Heart left ventricle (tissue), 16 donors: ENCODE measurements at regions of chr1 and their contacts with region 1.

Region 1: DNA sequence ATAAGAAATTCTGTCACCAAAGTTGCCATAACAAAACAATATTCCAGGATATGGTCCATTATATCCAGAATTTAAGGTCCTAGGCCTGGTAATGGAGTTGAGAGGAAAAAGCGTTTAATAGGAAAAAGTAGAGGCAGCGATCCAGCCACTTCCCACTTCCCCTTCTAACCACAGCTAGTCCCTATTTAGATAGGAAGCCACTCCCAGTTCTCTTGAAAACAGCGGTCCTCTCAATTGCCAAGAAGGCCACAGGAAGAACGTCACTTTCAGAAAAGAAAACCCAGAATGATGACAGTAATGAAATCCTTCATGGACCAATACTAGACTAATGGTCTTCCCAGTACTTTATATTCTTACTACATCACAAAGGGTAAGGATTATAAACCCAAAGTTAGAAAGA is 38.6 kb downstream of the ABL2 start:
- DNase-seq: peak in 4 of 5 donors; percentile 39 to 56 (median 46)
- ATAC-seq: peak; percentile 65 to 94 (median 82)
- H3K4me3 ChIP-seq: peak overlapping the region in 1 of 12 donors; percentile 9
- H3K27ac ChIP-seq: peak overlapping the region in 11 of 12 donors; percentile 17 to 88 (median 75)
- H3K4me1 ChIP-seq: peaks cover 0 to 28% (median 0%) of the 10 kb centered on the region in 12 donors
- H3K27me3 ChIP-seq: no peaks in the 10 kb centered on the region
- CTCF ChIP-seq: no peak
- POLR2A ChIP-seq: no peak

Region 2: DNA sequence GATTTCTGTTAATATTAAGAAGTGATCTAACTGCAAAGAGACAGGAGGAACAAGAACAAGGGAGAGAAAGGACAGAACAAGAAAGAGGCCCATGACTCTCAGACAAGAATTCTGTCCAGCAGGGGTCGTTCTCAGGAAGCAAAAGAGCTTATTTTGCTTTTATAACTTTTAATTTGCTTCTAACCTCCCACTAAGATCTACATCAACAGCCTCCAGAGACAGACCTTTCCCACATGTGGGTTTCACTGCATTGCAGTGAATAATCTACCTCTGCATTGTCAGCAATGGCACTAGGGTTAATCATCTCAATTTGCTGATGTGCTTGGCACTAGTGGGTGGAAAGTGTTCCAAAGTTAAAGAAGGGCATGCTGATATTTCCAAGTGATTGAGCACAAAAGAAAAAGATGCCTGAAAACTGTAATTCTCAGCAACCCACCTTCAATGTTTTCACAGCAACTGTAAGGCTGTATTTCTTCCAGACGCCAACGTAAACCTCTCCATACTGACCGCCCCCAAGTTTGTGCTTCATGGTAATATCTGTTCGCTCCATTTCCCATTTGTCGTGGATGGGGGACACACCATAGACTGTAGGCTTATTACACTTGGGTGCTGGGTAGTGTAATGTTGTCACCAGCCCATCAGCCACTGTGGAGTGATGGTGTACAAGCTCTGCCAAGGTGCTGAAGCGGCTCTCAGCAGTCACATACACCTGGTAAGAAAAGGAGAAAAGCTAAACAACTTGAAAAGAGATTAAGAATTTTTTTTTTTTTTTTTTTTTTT is 69.5 kb before region 1 on chr1:
- intact Hi-C with region 1: loop called in 9 of 10 experiments (anchors 2 to 5 kb)
- DNase-seq: no peak
- ATAC-seq: no peak
- H3K4me3 ChIP-seq: no peak overlapping the region
- H3K27ac ChIP-seq: no peak overlapping the region
- H3K4me1 ChIP-seq: peaks cover 0 to 16% (median 3%) of the 10 kb centered on the region in 12 donors
- H3K27me3 ChIP-seq: no peaks in the 10 kb centered on the region
- CTCF ChIP-seq: peak; percentile 23 to 74 (median 58)
- POLR2A ChIP-seq: no peak

Region 3: GRCh38 chr1:179129702-179130473 is 61.0 kb before region 1 on chr1:
- intact Hi-C with region 1: loop called in 1 of 10 experiments (anchors 5 kb)
- DNase-seq: no peak
- ATAC-seq: peak; percentile 52 to 77 (median 58)
- H3K4me3 ChIP-seq: peak overlapping the region in 10 of 12 donors; percentile 26 to 52 (median 38)
- H3K27ac ChIP-seq: peak overlapping the region; percentile 6 to 90 (median 62)
- H3K4me1 ChIP-seq: peaks cover 0 to 51% (median 15%) of the 10 kb centered on the region in 12 donors
- H3K27me3 ChIP-seq: no peaks in the 10 kb centered on the region
- CTCF ChIP-seq: no peak
- POLR2A ChIP-seq: no peak

Region 4: DNA sequence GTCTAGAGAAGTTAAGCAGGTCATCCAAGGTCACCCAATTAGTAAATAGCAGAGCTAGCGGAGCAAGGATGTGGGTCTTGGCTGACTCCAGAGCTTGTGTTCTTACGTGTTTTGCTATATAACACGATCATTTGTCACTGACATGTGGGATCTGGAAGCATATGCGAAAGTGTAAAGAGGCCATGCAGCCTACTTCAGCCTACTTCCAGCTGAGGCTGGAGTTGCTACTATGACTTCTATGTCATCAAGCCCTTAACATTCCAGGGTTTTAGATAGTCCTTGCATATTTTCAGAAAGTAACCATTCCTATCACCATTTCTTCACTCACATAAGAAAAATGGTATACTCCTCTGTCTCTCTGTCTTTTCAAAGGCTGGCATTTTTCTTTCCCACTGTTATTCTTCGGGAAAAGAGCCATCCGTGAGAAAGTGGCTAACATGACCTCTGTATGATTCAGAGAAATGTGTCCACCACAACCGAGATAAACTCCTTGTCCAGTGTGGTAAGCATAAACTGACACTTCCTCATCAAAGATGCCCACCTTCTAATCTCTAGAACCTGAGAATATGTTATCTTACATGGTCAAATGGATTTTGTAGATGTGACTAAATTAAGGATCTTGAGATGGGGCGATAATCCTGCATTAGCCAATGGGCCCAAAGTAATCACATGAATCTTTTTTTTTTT is 62.6 kb after region 1 on chr1:
- intact Hi-C with region 1: no loop called
- DNase-seq: no peak
- ATAC-seq: no peak
- H3K4me3 ChIP-seq: no peak overlapping the region
- H3K27ac ChIP-seq: no peak overlapping the region
- H3K4me1 ChIP-seq: no peaks in the 10 kb centered on the region
- H3K27me3 ChIP-seq: no peaks in the 10 kb centered on the region
- CTCF ChIP-seq: no peak
- POLR2A ChIP-seq: no peak